ENCODE measurements at regions of chr3 and their contacts with region 1.

Region 1: DNA sequence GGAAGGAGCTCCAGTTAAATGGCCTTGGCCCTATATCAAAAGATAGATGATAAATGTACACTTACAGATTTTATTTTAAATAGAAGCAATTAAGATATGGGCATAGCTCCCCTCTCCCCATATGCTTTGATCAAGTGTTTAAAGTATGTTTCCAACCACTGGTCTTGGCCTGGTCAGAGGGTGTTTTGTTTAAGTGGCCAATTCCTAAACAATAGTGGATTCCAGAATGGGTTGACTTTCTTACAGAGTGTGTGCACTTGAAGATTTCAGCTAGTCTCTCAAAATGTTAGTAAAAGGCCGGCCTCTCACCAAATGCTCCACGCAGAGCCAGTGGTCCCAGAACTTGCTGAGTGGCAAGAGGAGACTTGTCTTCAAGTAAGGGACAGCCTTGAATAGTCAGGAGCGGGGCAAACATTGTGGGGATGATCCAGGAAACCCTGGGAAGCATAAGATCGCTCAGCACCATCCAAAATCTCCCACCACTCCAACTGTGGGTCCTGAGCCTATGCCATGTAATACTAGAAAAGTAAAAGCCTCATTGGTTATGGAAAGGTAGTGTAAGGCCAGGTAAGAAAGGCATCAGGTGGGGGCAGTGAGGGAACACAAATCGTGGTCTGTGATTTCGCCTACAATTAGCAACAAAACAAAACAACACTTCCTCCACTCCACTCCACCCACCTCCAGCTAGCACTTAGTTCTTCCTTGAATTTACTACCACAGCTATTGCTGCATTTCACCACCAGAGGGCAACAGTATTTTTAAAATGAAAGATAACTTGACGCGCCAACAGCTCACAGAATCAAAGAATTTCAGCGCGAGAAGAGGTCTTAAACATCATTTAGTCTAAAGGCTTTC is 4.8 kb downstream of the RARRES1 start:
- DNase-seq: no peak
- ATAC-seq: peak; percentile 11

Region 2: GRCh38 chr3:158672293-158673176 is 54.9 kb before region 1 on chr3 and contains the start of gene LXN:
- intact Hi-C with region 1: loop called (anchors 10 kb)
- DNase-seq: peak; percentile 91
- ATAC-seq: peak; percentile 98
- total RNA-seq, gene LXN: 3.9 TPM

Region 3: GRCh38 chr3:158773845-158774830 is 46.7 kb after region 1 on chr3:
- intact Hi-C with region 1: loop called (anchors 5 kb)
- DNase-seq: no peak
- ATAC-seq: peak; percentile 58

Region 4: DNA sequence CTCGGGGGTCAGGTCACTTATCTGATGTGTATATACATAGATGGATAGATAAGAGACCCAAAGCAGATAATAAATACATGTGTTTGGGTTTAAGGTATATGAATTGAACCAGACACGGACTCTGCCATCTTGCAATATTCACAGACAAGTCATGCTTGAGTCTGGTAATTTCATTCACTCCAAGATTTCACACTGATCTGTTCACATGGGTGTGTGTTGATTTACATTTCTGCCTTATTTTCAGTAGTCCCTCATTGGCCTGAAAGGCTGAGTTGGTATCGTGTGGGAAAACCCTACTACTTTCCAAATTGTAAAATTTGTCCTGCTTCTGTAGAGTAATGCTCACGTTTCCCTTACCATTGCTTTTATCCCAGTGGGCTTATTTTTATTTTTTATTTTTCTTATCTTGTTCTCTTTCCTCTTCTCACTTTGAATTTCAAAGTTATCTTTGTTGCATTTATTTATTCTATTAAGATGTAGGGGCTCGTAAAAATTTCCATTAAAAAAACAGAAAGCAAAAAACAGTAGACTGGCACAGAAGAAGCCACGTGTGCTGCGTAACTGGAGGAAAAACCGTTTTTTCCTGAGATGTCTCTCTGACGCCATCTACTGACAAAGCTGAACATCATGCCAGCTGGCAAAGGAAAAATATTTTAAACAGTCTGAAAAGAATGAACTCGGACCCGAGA is 63.6 kb after region 1 on chr3:
- intact Hi-C with region 1: loop called (anchors 1 kb)
- DNase-seq: no peak
- ATAC-seq: peak; percentile 61